Esophagus muscularis mucosa (tissue), 4 donors: ENCODE measurements at regions of chr5 and their contacts with region 1.

Region 1: DNA sequence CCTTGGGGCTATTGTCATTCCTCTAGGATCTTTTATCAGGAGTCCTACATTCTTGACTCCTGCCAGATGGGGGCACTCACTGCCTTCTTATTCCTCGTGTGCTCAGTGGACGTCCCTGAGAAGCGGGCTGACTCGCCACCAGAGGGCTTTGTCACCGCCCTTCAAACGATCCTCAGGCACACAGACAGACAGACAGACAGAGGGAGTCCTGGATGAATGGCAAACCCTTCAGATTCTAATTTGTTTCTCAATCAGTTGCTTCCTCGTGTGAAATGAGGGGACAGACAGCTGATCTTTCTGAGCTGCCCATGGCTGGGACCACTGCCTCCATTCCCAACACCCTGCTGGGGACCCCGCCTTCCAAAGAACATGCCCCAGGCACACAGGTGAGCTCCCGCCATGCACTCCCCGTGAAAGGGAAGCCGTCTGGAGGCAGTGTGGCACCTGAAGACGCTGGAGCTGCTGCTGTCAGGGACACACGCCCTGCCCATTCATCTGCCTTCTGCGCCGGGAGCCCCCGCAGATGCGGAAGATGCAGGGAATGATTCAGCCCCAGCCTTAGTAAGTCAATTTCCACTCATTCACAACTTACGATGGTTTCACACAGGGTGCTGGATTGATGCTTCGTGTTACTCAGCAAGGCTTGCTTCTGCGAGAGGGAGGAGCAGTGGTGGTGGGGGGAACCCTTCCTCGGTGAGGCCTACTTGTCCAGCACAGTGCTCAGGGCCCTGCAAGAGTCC is 24.9 kb upstream of the SH3PXD2B start:
- DNase-seq: no peak
- H3K4me3 ChIP-seq: no peak overlapping the region
- H3K27ac ChIP-seq: peak overlapping the region; percentile 44 to 58 (median 44)
- H3K4me1 ChIP-seq: peaks cover 9 to 14% (median 9%) of the 10 kb centered on the region in 4 donors
- H3K27me3 ChIP-seq: no peaks in the 10 kb centered on the region
- CTCF ChIP-seq: peak; percentile 78 to 98 (median 80)
- EP300 ChIP-seq: no peak
- POLR2A ChIP-seq: no peak

Region 2: GRCh38 chr5:172640822-172641358 is 161.7 kb after region 1 on chr5 and contains the start of gene NEURL1B:
- intact Hi-C with region 1: loop called (anchors 2 kb)
- DNase-seq: no peak
- H3K4me3 ChIP-seq: peak within 1 kb of the TSS; percentile 68 to 98 (median 92)
- H3K27ac ChIP-seq: peak within 1 kb of the TSS; percentile 83 to 96 (median 94)
- H3K4me1 ChIP-seq: peaks cover 16 to 72% (median 65%) of the 10 kb centered on the region in 4 donors
- H3K27me3 ChIP-seq: no peaks in the 10 kb centered on the region
- CTCF ChIP-seq: peak in 2 of 3 experiments; percentile 21 to 43
- EP300 ChIP-seq: no peak
- POLR2A ChIP-seq: no peak
- total RNA-seq, gene NEURL1B: 34.1 to 87.1 (median 60.2) TPM

Region 3: DNA sequence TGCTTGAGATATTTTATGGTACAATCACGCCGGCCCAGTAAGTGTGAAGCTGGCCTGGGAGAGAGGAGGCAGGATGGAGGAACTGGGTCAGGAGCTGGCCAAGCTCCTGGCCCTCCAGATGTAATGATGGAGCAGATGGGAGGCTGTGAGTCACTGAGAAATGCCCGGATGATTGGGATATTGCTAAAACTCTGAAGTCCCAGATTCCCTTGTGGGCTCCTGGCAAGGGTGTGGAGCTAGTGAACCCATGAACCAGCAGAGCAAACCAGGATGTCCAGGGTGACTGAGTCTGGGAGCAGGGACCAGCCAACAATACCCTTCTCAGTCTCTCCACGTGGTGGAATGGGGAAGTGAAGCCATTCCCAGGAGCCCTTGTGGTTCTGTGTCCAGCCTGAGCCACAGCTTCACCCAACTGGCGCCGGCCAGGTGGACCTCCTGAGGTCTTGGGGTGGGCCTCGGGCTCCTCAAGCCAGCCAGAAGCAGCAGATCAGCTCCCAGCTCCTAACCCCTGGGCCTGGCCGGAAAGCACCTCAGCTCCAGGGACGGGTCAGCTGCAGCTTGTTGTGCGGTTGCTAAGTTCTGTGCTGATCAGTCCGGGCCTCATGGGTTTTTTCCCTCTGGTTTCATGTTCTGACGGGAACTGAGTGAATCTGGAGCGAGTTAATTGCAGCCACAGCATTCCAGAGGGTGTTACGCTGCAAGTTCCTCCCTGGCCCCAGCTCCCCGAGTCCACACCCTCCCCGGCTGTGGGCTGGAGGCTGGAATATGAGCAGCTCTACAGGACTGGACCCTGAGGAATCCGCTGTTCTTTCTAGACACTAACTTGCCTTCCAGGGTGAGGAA is 254.1 kb after region 1 on chr5:
- intact Hi-C with region 1: no loop called
- DNase-seq: peak; percentile 97
- H3K4me3 ChIP-seq: peak overlapping the region in 3 of 4 donors; percentile 4 to 45 (median 22)
- H3K27ac ChIP-seq: peak overlapping the region; percentile 90 to 98 (median 96)
- H3K4me1 ChIP-seq: peaks cover 34 to 73% (median 56%) of the 10 kb centered on the region in 4 donors
- H3K27me3 ChIP-seq: no peaks in the 10 kb centered on the region
- CTCF ChIP-seq: peak in 2 of 3 experiments; percentile 13 to 28
- EP300 ChIP-seq: peak; percentile 25
- POLR2A ChIP-seq: no peak